Dorsolateral prefrontal cortex (tissue), 120 donors: ENCODE measurements at regions of chr2 and their contacts with region 1.

Region 1: DNA sequence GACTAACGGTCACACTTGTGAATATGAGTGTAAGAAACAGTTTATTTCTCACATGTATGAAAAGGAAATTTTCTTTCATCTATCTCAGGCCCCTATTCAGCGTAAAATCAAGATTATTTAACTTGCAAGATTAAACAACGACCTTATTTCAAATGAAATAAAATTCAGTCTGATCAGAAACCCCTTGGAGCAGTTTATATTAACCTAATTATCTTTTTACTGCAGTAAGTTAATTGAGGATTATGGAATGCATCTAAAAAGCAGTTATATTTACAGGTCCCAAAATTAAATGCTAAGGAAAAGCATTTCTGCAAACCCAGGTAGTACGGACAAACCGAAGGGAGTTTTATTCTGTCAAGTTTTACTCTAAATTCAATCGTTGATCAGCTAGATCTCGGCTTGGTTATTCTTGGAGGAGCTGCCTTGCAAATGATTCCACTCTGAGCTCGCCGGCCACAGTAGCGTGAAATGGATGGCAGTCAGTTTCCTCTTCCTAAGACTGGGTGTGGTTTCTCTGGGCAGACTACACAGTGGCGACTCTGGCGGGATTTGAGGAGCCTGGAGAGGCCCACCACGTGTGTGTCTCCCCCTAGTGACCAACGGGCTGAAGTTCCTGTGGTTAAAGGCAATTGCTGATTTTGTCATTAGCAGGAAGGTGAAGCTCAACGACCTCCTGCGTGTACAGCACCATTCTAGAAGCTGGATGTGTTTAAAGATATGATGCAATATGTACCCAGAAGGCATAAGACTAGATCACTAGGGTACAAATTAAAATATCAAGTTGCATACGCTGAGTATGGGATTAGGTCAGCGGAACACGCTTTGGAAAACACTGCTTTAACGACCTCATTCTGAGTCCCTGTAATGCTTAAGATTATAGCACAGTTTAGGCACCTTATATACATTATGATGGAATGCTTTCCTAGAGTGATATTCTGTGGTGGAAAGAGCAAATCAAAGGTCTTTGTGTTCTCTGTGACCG is 36.4 kb downstream of the PRKRA start:
- DNase-seq: peak; percentile 61 to 89 (median 84)
- H3K4me3 ChIP-seq: peak overlapping the region; percentile 58 to 88 (median 72)
- H3K27ac ChIP-seq: peak overlapping the region in 53 of 59 donors; percentile 35 to 95 (median 87)
- H3K27me3 ChIP-seq: no peaks in the 10 kb centered on the region
- CTCF ChIP-seq: peak; percentile 75 to 94 (median 88)

Region 2: DNA sequence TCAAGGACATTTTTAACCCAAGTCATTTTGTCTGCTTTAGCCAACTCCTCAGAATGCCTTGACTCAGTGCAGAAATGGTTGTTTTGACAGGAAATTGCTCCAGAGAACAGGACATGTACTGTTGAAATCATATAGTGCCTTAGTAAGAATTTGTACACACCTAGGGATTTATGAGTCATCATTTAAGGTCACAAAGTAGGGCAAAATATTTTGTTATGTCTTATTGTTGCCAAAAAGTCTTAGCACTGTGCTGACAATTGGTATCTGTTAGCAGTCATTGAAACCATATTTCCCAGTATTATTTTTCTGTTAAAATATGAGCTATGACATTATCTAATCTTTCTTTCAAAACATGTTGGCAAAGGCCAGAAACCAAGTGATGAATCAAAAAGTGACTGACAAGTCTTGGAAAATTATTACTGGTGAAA is 115.8 kb before region 1 on chr2:
- intact Hi-C with region 1: no loop called
- DNase-seq: no peak
- H3K4me3 ChIP-seq: no peak overlapping the region
- H3K27ac ChIP-seq: no peak overlapping the region
- H3K27me3 ChIP-seq: no peaks in the 10 kb centered on the region
- CTCF ChIP-seq: no peak

Region 3: DNA sequence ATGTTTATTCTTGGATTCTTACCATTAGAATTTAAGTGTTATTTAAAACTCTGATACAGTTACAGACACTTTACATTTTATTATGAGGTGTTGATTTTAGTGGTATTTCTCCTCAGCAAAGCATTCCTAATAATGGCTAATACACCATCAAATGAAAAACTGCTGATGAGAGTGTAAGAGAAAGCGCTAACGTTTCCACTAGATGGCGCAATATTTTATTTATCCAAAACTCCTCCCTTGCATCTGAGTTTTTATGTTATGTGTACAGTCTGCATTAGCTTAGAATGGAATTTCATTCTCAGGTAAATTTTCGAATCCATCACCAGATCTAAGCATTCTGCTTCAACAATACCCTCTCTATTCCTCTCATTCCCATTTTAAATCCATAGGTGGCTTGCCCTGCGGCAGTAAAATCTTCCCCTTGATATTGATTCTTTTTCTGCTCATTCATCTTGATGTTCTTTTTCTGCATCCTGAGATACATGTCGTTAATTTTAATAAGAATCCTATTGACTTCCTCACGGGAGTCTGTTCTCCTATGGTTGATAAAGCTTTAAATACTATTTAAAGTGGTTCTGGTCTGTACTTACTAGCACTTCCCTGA is 17.5 kb before region 1 on chr2:
- intact Hi-C with region 1: loop called in 1 of 2 experiments (anchors 2 kb)
- DNase-seq: peak in 1 of 10 donors; percentile 11
- H3K4me3 ChIP-seq: no peak overlapping the region
- H3K27ac ChIP-seq: peak overlapping the region in 2 of 59 donors; percentile 9 to 10
- H3K27me3 ChIP-seq: no peaks in the 10 kb centered on the region
- CTCF ChIP-seq: peak; percentile 59 to 85 (median 75)

Region 4: DNA sequence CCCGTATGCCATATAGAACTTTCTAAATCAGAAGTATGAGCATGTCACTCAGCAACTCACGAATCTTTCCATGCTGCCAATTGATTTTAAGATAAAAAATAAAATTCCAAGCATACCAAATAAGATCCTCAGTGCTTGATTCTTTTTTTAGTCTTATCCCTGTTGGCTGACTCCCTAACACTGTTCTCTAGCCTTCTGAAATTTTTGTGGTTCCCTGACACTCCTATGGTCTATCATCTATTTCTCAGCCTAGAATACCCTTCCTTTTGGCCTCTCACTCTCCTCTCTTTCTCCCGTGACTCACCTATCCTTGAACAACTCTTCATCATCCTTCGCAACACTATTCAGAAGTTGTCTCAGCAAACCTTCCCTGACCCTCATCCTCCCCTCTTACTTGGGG is 584.9 kb after region 1 on chr2:
- intact Hi-C with region 1: no loop called
- DNase-seq: no peak
- H3K4me3 ChIP-seq: no peak overlapping the region
- H3K27ac ChIP-seq: no peak overlapping the region
- H3K27me3 ChIP-seq: no peaks in the 10 kb centered on the region
- CTCF ChIP-seq: no peak